HepG2 (cell line): ENCODE measurements at regions of chr16 and their contacts with region 1.

Region 1: GRCh38 chr16:81403616-81404373 is 40.8 kb upstream of the CMIP start:
- DNase-seq: peak; percentile 79
- ATAC-seq: peak; percentile 90
- H3K4me3 ChIP-seq: peak overlapping the region; percentile 57 to 82 (median 71); a peak in 5 of 6 replicates
- H3K27ac ChIP-seq: no peak overlapping the region
- H3K4me1 ChIP-seq: peaks cover 33% of the 10 kb centered on the region
- H3K27me3 ChIP-seq: peaks cover 2% of the 10 kb centered on the region in 2 experiments; a peak in 1 of 5 replicates
- CTCF ChIP-seq: peak; percentile 100
- EP300 ChIP-seq: no peak
- POLR2A ChIP-seq: peak in 1 of 2 experiments; percentile 28; a peak in 1 of 4 replicates
- RAD21 ChIP-seq: peak; percentile 99

Region 2: DNA sequence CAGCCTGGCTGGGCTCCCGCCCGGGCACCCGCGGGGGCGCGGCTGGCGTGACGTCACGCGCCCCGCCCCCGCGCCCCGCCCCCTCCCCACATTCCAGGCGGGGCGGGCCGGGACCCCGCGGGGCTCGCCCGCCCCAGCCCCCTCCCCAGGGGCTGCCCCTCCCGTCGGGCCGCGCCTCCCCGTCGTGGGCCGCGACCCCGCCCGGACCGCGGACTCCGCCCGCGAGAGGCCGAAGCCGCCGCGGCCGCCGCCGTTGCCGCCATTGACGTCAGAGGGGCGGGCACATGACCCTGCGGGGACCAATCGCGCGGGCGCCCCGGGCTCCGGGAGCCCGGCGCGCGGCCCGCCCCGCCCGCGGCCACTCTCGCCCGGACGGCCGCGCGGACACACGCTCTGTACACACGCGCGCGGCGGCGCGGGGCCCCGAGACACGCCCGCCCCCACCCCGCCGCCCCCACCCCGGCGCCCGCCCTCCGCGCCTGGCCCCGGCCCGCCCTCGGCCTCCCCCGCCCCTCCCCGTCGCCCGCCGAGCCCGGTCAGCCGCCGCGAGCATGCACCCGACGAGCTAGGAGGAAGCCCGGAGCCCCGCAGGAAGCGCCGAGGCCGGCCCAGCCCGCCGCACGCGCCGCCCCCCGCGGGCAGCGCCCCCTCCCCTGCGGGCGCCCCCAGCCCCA is 40.8 kb after region 1 on chr16 and contains the start of gene CMIP:
- CTCF ChIA-PET with region 1: no interaction called
- POLR2A ChIA-PET with region 1: interaction called, 3 read pairs
- in situ Hi-C with region 1: no loop called
- intact Hi-C with region 1: loop called (anchors 1 kb)
- DNase-seq: peak; percentile 68
- ATAC-seq: peak; percentile 4; the same call in 2 of the 3 replicates
- H3K4me3 ChIP-seq: peak within 1 kb of the TSS; percentile 92 to 99 (median 93)
- H3K27ac ChIP-seq: peak within 1 kb of the TSS; percentile 89
- H3K4me1 ChIP-seq: peaks cover 46% of the 10 kb centered on the region
- H3K27me3 ChIP-seq: peaks cover 2 to 24% of the 10 kb centered on the region in 2 experiments; a peak in 3 of 5 replicates
- CTCF ChIP-seq: no peak
- EP300 ChIP-seq: no peak
- POLR2A ChIP-seq: peak in 1 of 2 experiments; percentile 14; a peak in 1 of 4 replicates
- RAD21 ChIP-seq: peak; percentile 35; the same call in 1 of the 2 replicates
- total RNA-seq, gene CMIP: 10.9 and 21.7 TPM in 2 replicates

Region 3: DNA sequence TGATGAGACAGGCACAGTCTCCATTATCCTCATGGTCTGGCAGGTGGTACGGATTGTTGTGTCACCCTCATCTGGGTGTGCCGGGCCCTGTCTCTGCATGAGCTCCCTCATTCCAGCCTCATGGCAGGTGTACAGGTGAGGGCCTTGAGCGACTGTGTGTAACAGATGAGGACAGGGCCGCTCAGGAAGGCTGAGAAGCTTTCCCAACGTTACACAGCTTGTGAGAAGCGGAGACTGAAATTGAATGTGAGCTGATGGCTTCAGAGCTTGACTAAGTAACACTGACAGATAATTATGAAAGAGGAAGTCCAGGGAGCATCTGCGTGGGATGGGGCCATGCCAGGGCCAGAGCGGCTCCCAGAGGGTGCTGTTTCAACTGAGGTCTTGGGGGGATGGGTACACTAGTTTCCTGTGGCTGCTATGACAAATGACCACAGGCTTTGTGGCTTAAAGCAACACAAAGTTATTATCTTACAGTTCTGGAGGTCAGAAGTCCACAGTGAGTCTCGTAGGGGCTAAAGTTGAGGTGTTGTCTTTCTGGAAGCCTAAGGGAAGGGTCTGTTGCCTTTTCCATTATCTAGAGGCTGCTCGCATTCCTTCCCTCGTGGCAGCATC is 77.5 kb after region 1 on chr16:
- CTCF ChIA-PET with region 1: no interaction called
- POLR2A ChIA-PET with region 1: no interaction called
- in situ Hi-C with region 1: no loop called
- intact Hi-C with region 1: no loop called
- DNase-seq: peak; percentile 94
- ATAC-seq: peak; percentile 87
- H3K4me3 ChIP-seq: peak overlapping the region in 1 of 3 experiments; percentile 32; a peak in 2 of 6 replicates
- H3K27ac ChIP-seq: peak overlapping the region; percentile 60
- H3K4me1 ChIP-seq: peaks cover 79% of the 10 kb centered on the region
- H3K27me3 ChIP-seq: no peaks in the 10 kb centered on the region
- CTCF ChIP-seq: peak; percentile 55
- EP300 ChIP-seq: peak; percentile 67 to 84
- POLR2A ChIP-seq: peak in 1 of 2 experiments; percentile 25; a peak in 2 of 4 replicates
- RAD21 ChIP-seq: peak; percentile 53; the same call in 1 of the 2 replicates

Region 4: GRCh38 chr16:81582655-81583441 is 179.1 kb after region 1 on chr16:
- CTCF ChIA-PET with region 1: interaction called, 3 read pairs
- POLR2A ChIA-PET with region 1: no interaction called
- in situ Hi-C with region 1: no loop called
- intact Hi-C with region 1: loop called (anchors 5 kb)
- DNase-seq: peak; percentile 79
- ATAC-seq: peak; percentile 69
- H3K4me3 ChIP-seq: no peak overlapping the region
- H3K27ac ChIP-seq: peak overlapping the region; percentile 58
- H3K4me1 ChIP-seq: peaks cover 85% of the 10 kb centered on the region
- H3K27me3 ChIP-seq: no peaks in the 10 kb centered on the region
- CTCF ChIP-seq: peak; percentile 82
- EP300 ChIP-seq: peak; percentile 51 to 72; a peak in 2 of 4 replicates
- POLR2A ChIP-seq: 0 out of 4 replicates have a peak, but pooled peaks of 1 of the 2 experiments have one; percentile 21
- RAD21 ChIP-seq: no peak

Region 5: GRCh38 chr16:81723098-81723723 is 319.4 kb after region 1 on chr16:
- CTCF ChIA-PET with region 1: interaction called, 25 read pairs
- POLR2A ChIA-PET with region 1: no interaction called
- in situ Hi-C with region 1: loop called (anchors 5 kb)
- intact Hi-C with region 1: loop called (anchors 1 kb)
- DNase-seq: peak; percentile 86
- ATAC-seq: peak; percentile 91
- H3K4me3 ChIP-seq: no peak overlapping the region
- H3K27ac ChIP-seq: no peak overlapping the region
- H3K4me1 ChIP-seq: 0 out of 2 replicates have a peak, but pooled peaks cover 5% of the 10 kb centered on the region
- H3K27me3 ChIP-seq: peaks cover 0 to 24% of the 10 kb centered on the region in 2 experiments; a peak in 4 of 5 replicates
- CTCF ChIP-seq: peak; percentile 92
- EP300 ChIP-seq: no peak
- POLR2A ChIP-seq: no peak
- RAD21 ChIP-seq: peak; percentile 80